ENCODE measurements at regions of chr14 and their contacts with region 1.

Region 1: DNA sequence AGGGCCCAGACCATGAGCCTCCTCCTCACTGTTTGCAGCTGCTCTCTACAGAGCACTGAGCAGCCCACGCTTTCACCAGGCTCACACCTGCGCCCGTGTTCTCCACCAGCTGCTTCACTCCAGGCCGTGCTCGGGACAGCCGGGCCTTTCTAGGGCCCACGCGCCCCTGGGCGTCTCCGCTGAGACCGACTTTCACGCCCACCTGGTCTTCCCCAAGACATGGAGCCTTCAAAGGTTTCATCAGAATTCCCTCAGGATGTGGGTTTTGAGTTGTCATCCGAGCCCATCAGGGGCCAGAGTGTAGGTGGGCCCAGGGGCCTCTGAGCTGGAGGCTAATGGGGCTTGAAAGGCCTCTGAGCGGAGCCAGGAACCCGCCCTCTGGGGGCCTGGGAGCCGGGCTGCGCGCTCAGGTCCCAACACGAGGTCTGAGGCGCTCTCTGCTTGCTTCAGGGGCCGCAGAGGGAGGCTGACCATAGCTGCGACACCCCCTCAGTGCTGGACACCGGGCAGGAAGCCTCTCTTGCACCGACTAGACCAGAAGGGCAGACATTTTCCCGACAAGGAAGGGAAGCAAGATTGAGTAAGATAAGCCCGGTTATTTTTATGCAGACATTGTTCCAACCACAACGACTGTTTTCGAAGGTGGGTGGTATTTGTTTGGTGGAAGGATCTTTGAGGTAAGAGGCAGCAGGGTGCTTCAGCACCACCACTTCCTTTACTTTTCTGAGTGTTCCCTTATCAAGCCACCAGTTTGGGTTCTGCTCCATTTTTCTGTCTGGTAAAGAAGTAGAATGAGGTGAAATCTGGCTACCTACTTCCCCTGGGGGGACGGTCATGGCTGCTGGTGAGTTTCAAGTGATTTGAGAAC is 125.0 kb upstream of the FUT8 start:
- DNase-seq: peak; percentile 86
- ATAC-seq: peak; percentile 76
- H3K4me3 Mint-ChIP-seq: peak overlapping the region; percentile 76
- H3K27ac Mint-ChIP-seq: peak overlapping the region; percentile 98
- H3K4me1 Mint-ChIP-seq: peaks cover 70% of the 10 kb centered on the region
- H3K27me3 Mint-ChIP-seq: no peaks in the 10 kb centered on the region
- CTCF ChIP-seq: no peak

Region 2: GRCh38 chr14:64986578-64987571 is 300.6 kb before region 1 on chr14 and contains the start of gene FNTB:
- CTCF ChIA-PET with region 1: no interaction called
- POLR2A ChIA-PET with region 1: no interaction called
- intact Hi-C with region 1: loop called (anchors 10 kb)
- DNase-seq: peak; percentile 96
- ATAC-seq: peak; percentile 94
- H3K4me3 Mint-ChIP-seq: peak within 1 kb of the TSS; percentile 78
- H3K27ac Mint-ChIP-seq: peak within 1 kb of the TSS; percentile 94
- H3K4me1 Mint-ChIP-seq: peaks cover 43% of the 10 kb centered on the region
- H3K27me3 Mint-ChIP-seq: peaks cover 7% of the 10 kb centered on the region
- CTCF ChIP-seq: peak; percentile 75
- total RNA-seq, gene FNTB: 18.8 to 23.5 TPM

Region 3: DNA sequence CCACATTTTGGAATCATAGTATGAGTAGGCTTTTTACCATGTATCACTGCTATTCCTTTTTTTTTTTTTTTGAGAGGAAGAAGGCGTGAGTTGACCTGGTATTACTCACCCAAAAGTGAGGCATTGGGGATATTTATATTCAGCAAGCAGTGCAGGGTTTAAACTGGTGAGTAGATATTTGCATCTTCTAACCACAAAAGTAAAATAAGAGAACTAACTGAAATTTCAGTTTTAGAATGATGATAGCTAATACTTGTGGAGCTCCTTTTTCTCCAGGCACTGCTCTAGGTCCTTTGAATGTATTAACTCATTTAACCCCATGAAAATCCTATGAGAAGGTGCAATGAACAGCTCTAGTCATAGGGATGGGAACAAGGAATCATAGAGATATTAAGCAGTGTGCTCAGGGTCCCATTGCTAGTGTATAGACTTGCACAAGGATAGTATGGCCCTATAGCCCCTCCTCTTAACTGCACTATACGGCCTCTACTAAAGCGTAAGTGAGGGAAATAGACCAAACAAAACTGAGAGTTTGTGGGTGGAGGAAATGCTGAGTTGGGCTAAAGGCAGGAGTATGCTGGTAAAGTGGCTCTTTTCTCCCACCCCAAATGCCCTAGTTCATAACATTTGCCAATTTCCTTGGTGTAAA is 80.9 kb before region 1 on chr14:
- CTCF ChIA-PET with region 1: interaction called, 3 read pairs
- POLR2A ChIA-PET with region 1: interaction called, 3 read pairs
- intact Hi-C with region 1: loop called (anchors 5 kb)
- DNase-seq: peak; percentile 57
- ATAC-seq: peak; percentile 78
- H3K4me3 Mint-ChIP-seq: peak overlapping the region; percentile 53
- H3K27ac Mint-ChIP-seq: peak overlapping the region; percentile 87
- H3K4me1 Mint-ChIP-seq: peaks cover 60% of the 10 kb centered on the region
- H3K27me3 Mint-ChIP-seq: no peaks in the 10 kb centered on the region
- CTCF ChIP-seq: no peak

Region 4: GRCh38 chr14:65302571-65303189 is 15.2 kb after region 1 on chr14:
- CTCF ChIA-PET with region 1: interaction called, 6 read pairs
- POLR2A ChIA-PET with region 1: interaction called, 24 read pairs
- intact Hi-C with region 1: loop called (anchors 1 kb)
- DNase-seq: peak; percentile 92
- ATAC-seq: peak; percentile 80
- H3K4me3 Mint-ChIP-seq: peak overlapping the region; percentile 61
- H3K27ac Mint-ChIP-seq: peak overlapping the region; percentile 80
- H3K4me1 Mint-ChIP-seq: peaks cover 71% of the 10 kb centered on the region
- H3K27me3 Mint-ChIP-seq: no peaks in the 10 kb centered on the region
- CTCF ChIP-seq: no peak

Region 5: GRCh38 chr14:65336191-65336591 is 48.7 kb after region 1 on chr14:
- CTCF ChIA-PET with region 1: interaction called, 3 read pairs
- POLR2A ChIA-PET with region 1: interaction called, 7 read pairs
- intact Hi-C with region 1: loop called (anchors 5 kb)
- DNase-seq: peak; percentile 81
- ATAC-seq: peak; percentile 89
- H3K4me3 Mint-ChIP-seq: peak overlapping the region; percentile 80
- H3K27ac Mint-ChIP-seq: peak overlapping the region; percentile 94
- H3K4me1 Mint-ChIP-seq: peaks cover 56% of the 10 kb centered on the region
- H3K27me3 Mint-ChIP-seq: no peaks in the 10 kb centered on the region
- CTCF ChIP-seq: no peak

Measured in activated CD8-positive, alpha-beta T cell treated with anti-CD3 and anti-CD28 coated beads for 36 hours (primary cell).